Heart left ventricle (tissue), 16 donors: ENCODE measurements at regions of chr17 and their contacts with region 1.

Region 1: DNA sequence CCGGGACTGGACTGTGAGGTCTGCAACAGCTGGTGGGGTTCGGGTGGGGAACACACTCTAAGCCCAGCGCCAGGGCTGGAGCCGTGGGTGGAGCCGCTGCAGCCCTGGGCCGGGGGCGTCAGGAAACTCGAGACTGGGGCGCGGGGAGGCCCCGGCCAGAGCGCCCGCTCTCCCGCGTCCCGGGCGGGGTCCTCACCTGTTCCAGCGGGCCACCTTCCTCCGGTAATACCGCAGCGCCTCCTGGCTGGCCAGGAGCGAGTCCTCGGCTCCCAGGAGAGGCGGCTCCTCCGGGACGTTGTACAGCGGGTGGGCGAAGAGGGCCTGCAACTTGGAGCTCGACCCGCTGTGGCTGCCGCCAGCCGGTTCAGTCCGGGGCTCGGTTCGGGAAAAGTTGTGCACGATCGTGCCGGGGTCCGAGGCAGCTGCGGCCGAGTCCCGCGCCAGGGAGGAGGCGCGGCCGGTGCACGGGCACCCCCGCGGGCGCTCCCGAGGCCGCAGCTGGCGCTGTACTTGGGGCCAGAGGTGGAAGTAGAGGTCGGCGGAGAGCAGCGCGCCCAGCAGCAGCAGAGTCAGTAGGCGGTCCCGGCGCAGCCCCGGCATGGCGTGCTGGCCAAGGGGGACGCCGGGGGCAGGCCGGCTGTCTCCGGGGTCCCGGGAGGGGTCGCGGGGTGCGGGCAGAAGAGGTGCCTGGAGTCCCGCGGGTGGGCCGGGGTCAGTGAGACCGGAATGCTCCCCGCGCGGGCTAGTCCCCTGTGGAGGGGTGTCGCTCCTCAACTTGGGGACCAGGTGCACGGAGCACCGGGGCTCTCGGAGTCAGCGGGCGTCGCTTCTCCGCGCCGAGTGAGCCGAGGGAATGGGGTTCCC is 868 bp downstream of the FAM20A start:
- DNase-seq: peak; percentile 39 to 84 (median 68)
- ATAC-seq: peak in 3 of 4 donors; percentile 45 to 73 (median 72)
- H3K4me3 ChIP-seq: peak overlapping the region; percentile 64 to 97 (median 76)
- H3K27ac ChIP-seq: peak overlapping the region; percentile 72 to 98 (median 76)
- H3K4me1 ChIP-seq: peaks cover 0 to 55% (median 17%) of the 10 kb centered on the region in 12 donors
- H3K27me3 ChIP-seq: peaks cover 0 to 15% (median 0%) of the 10 kb centered on the region in 9 donors
- CTCF ChIP-seq: peak in 9 of 12 donors; percentile 12 to 53 (median 34)
- POLR2A ChIP-seq: no peak

Region 2: GRCh38 chr17:68468334-68468733 is 132.0 kb before region 1 on chr17:
- intact Hi-C with region 1: loop called in 4 of 10 experiments (anchors 2 to 10 kb)
- DNase-seq: peak in 4 of 5 donors; percentile 43 to 60 (median 46)
- ATAC-seq: peak; percentile 82 to 91 (median 90)
- H3K4me3 ChIP-seq: no peak overlapping the region
- H3K27ac ChIP-seq: peak overlapping the region; percentile 71 to 97 (median 90)
- H3K4me1 ChIP-seq: peaks cover 0 to 27% (median 6%) of the 10 kb centered on the region in 12 donors
- H3K27me3 ChIP-seq: no peaks in the 10 kb centered on the region
- CTCF ChIP-seq: no peak
- POLR2A ChIP-seq: no peak

Region 3: DNA sequence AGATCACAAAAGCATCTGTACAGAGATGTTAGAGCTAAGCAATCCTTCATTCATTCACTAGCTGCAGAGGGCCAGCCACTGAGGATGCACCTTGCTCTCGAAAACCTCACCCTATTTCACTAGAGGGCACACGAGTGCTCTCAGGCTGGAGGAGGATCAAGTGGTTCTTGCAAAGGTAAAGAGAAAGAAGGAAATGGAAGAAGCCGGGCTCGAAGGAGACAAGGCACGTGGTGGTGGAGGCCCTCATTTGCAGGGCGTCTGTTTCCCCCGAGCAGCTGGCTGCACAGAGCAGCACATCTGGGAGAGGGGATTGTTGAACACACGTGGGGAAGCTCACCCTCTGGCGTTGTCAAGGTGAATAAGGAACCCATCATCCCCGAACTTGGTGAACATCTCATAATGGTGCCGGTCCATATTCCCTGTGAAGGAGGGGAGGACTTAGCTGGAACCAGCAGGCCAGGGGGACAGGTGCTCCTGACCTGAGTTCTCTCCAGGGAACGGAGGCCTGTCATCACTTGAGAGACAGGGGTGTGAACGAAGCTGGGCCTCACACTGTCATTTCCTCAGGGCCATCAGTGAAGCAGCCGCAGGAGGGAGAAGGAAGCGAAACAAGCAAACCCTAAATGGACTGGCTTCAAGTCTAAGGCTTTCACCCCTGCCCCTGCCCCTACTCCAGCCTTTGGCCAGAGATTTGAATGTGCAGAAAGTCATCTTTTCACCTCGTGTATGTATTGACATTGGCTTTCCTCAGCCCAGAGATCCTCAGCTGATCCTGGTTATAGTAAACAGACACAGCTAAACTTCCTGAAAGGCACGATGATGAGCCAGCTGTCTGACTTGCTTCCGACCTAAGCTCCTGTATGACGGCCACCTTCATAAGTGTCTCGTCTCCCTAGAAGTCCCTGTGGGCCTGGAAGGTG is 60.5 kb before region 1 on chr17:
- intact Hi-C with region 1: loop called in 1 of 10 experiments (anchors 5 kb)
- DNase-seq: no peak
- ATAC-seq: peak; percentile 5 to 27 (median 16)
- H3K4me3 ChIP-seq: no peak overlapping the region
- H3K27ac ChIP-seq: peak overlapping the region in 9 of 12 donors; percentile 6 to 60 (median 39)
- H3K4me1 ChIP-seq: peaks cover 0 to 27% (median 14%) of the 10 kb centered on the region in 12 donors
- H3K27me3 ChIP-seq: no peaks in the 10 kb centered on the region
- CTCF ChIP-seq: peak in 7 of 12 donors; percentile 11 to 39 (median 27)
- POLR2A ChIP-seq: no peak